ENCODE measurements at regions of chr11 and their contacts with region 1.

Region 1: DNA sequence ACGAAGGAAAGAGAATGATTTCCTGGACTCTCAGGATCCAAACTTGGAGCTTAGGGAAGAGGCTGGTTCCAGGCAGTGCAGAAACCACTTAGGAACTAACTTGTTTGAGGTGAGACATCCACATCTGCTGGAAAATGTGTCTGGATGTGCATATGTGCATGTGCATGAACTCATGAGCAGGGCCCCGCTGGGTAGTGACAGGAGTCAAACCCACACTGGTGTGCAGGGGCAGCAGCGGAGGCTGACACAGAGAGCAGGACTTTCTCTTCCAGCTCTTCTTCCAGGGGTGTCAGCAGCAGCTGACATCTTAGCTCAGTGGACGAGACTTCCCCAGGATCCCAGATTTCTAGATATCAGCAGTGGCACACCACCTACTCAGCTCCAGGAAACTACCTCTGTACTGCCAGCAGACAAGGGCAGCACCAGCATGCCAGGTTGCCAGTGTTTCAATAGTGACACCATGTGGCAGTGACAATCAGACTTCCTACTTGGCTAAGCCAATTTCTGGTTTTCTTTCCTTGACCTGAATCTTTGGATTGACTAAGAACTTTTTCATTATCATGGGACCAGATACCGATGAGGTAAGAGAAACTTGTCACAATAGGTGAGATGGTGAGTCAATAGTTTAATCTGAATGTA is 227.5 kb upstream of the ZC3H12C start:
- DNase-seq: no peak
- H3K4me3 ChIP-seq: no peak overlapping the region
- H3K27ac ChIP-seq: no peak overlapping the region
- H3K4me1 ChIP-seq: peaks cover 23% of the 10 kb centered on the region
- H3K27me3 ChIP-seq: no peaks in the 10 kb centered on the region
- CTCF ChIP-seq: no peak
- POLR2A ChIP-seq: no peak

Region 2: GRCh38 chr11:109641549-109641948 is 224.1 kb before region 1 on chr11:
- CTCF ChIA-PET with region 1: no interaction called
- POLR2A ChIA-PET with region 1: no interaction called
- dilution Hi-C with region 1: no loop called
- intact Hi-C with region 1: no loop called
- DNase-seq: no peak
- H3K4me3 ChIP-seq: no peak overlapping the region
- H3K27ac ChIP-seq: no peak overlapping the region
- H3K4me1 ChIP-seq: no peaks in the 10 kb centered on the region
- H3K27me3 ChIP-seq: no peaks in the 10 kb centered on the region
- CTCF ChIP-seq: no peak
- POLR2A ChIP-seq: no peak

Region 3: GRCh38 chr11:109818290-109818689 is 47.4 kb before region 1 on chr11:
- CTCF ChIA-PET with region 1: no interaction called
- POLR2A ChIA-PET with region 1: no interaction called
- dilution Hi-C with region 1: no loop called
- intact Hi-C with region 1: no loop called
- DNase-seq: no peak
- H3K4me3 ChIP-seq: no peak overlapping the region
- H3K27ac ChIP-seq: no peak overlapping the region
- H3K4me1 ChIP-seq: no peaks in the 10 kb centered on the region
- H3K27me3 ChIP-seq: no peaks in the 10 kb centered on the region
- CTCF ChIP-seq: no peak
- POLR2A ChIP-seq: no peak

Region 4: DNA sequence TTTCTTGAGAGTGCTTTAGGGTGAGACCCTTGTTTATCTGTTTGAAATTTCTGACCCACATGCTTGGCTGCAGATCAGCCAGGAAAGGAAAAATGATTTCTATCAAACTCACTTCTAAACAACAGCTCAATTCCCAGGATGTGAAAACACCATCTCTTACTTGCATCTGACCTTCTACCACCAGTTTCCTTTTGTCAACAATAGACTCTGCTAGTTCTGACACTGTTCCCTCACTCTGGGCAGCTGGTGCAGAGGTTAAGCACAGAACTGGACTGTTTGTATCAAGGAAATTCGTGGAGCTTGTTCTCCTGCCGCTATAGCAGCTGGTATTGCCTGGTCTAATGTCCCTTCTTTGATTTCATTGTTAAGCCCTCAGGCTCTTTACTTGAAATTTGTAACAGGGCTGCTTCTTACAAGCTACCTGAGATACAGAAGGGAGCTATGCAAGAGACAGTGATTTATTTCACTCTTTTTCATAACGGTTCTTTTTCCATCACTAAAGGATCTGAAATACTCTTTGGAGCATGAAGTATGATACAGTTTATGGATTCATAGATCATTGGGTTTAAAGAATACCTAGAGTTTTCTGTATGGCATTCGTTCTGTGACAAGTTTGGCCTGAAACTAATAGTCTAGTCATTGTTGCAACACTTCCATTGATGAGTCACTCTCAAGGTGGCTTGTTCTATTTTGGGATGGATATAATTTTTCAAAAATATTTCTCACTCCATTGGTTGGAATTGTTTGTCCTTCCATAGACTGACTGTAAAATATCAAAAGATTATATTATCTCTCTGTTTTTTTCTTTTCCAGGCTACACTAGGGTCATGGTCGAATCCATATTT is 49.4 kb after region 1 on chr11:
- CTCF ChIA-PET with region 1: interaction called, 5 read pairs
- POLR2A ChIA-PET with region 1: no interaction called
- dilution Hi-C with region 1: no loop called
- intact Hi-C with region 1: loop called (anchors 2 kb)
- DNase-seq: peak; percentile 94
- H3K4me3 ChIP-seq: peak overlapping the region in 1 of 3 experiments; percentile 40
- H3K27ac ChIP-seq: peak overlapping the region; percentile 94
- H3K4me1 ChIP-seq: peaks cover 23% of the 10 kb centered on the region
- H3K27me3 ChIP-seq: no peaks in the 10 kb centered on the region
- CTCF ChIP-seq: no peak
- POLR2A ChIP-seq: peak; percentile 35